Transverse colon (tissue), 4 donors: ENCODE measurements at regions of chr6 and their contacts with region 1.

Region 1: DNA sequence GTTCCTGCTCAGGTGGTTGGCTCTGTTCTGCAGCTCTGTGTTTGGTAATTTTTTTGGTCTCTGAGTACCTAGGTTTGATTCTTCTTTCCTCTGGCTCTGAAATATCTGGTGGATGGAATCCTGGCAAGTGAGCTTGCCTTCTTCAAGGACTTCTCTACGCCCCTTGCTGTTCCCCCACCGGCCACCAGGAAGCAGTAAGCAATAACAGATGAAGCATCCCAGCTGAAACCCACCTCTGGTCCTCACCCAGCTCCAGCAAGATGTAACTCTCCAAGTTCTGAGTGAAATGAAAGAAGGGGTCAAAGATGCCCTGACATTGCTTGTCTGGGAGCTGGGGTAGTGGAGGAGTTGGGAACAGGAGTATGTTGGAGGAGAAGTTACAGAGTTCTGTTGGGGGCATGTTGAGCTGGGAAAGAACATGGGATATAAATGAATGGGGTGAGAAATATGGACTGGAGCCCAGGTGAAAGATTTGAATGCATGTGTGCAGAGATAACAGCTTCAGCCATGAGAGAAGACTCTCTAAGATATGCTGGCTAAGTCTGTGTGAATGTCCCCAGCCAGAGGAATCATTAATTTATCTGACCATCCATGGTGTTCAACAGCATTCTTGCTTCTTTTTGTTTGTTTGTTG is 51.3 kb upstream of the GLP1R start:
- DNase-seq: no peak
- H3K4me3 ChIP-seq: no peak overlapping the region
- H3K27ac ChIP-seq: no peak overlapping the region
- H3K4me1 ChIP-seq: no peaks in the 10 kb centered on the region
- H3K27me3 ChIP-seq: peaks cover 18% of the 10 kb centered on the region
- CTCF ChIP-seq: peak in 4 of 5 experiments; percentile 23 to 34 (median 28)
- EP300 ChIP-seq: no peak
- POLR2A ChIP-seq: no peak

Region 2: DNA sequence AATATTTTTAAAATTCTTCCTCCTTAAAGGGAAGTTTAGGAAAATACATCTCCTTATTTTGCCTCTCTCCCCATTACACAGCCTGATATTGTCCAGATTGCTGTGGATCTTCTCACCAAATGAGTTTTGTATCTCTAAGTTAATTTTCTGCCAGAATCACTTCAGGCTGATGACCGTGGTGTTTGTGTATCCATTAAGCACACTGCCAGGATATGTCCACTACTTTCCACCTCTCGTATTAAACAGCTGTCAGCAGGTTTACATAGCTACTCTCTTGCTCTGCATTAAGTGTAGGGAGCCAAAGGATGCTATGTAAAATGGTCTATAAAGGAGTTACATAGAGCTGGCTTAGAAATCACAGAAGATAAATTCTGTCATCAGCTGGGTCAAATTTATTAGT is 976.7 kb before region 1 on chr6:
- in situ Hi-C with region 1: no loop called
- intact Hi-C with region 1: loop called (anchors 5 kb)
- DNase-seq: no peak
- H3K4me3 ChIP-seq: no peak overlapping the region
- H3K27ac ChIP-seq: no peak overlapping the region
- H3K4me1 ChIP-seq: peaks cover 10 to 44% (median 27%) of the 10 kb centered on the region in 4 donors
- H3K27me3 ChIP-seq: no peaks in the 10 kb centered on the region
- CTCF ChIP-seq: no peak
- EP300 ChIP-seq: no peak
- POLR2A ChIP-seq: no peak